ENCODE measurements at regions of chr4 and their contacts with region 1.

Region 1: DNA sequence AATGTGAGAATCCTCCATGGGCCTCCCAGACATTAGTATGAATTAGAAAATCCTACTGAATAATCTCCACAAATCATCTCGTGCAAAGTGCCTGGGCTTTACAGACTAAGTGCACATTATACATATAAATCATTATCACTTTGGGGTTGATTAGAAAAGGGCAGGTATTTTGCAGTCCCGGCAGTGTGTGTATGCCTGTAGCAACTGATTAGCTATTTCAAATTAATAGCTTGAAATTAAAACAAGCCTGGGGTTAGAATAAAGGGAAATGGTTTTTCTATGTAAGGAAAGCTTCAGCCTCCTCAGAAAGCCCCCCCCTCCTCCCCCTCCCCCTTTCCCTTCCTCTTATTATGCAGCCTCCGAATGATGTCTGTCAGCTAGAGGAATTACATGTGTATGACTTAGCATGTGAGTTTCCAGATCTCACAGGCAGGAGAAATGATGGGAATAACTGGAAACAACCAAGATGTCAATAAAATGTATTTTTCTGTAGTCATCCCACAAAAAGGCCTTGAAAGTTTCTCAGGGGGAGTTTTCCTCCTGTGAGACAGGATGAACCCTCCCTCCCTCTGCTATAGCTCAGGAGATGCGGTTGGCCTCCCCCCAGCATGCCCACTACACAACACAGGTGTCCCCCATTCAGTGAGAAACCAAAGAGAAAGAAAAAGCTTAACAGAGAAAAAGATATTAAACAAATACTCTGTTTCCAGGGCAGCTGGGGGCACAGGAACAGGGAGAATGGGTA is 41.2 kb upstream of the RASGEF1B start:
- DNase-seq: no peak
- ATAC-seq: peak; percentile 65
- H3K4me3 Mint-ChIP-seq: peak overlapping the region; percentile 60
- H3K27ac Mint-ChIP-seq: peak overlapping the region; percentile 84
- H3K4me1 Mint-ChIP-seq: peaks cover 73% of the 10 kb centered on the region
- H3K27me3 Mint-ChIP-seq: no peaks in the 10 kb centered on the region
- CTCF ChIP-seq: no peak

Region 2: DNA sequence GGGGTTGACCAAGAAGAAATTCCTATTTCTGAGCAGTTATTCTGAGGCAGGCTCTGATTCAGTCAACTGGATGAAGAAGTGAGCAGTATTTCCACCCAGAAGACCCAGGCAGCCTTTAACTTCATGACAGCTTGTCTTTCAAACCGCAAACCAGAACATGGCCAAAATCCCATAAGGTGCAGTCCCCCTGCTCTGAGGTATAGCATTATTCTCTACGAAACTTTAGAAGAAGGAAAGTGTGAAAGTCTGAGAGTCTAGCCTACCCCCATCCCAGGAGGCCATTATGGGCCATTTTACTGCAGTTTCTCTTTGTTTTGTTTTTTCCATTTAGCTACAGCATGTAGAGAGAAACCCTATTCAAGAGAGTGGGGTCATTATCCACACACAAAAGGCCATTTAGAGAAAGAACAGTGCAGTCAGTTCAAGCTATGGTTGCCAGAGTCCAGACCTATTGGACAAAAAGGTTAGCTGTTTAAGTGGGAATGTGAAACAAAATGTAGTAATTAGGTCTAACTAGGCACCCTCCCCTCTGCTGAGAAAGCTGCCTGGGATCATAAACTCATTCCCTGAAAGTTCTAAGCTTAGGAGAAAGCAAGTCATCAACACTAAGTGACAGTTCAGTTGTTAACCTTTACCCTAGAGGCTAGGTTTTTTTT is 10.9 kb after region 1 on chr4:
- CTCF ChIA-PET with region 1: no interaction called
- POLR2A ChIA-PET with region 1: interaction called, 6 read pairs
- intact Hi-C with region 1: loop called (anchors 1 kb)
- DNase-seq: no peak
- ATAC-seq: peak; percentile 49
- H3K4me3 Mint-ChIP-seq: no peak overlapping the region
- H3K27ac Mint-ChIP-seq: no peak overlapping the region
- H3K4me1 Mint-ChIP-seq: peaks cover 24% of the 10 kb centered on the region
- H3K27me3 Mint-ChIP-seq: no peaks in the 10 kb centered on the region
- CTCF ChIP-seq: no peak

Measured in activated B cell treated with CpG ODN at 0.5 μM for 24 hours (primary cell).